ENCODE measurements at regions of chr15 and their contacts with region 1.

Region 1: DNA sequence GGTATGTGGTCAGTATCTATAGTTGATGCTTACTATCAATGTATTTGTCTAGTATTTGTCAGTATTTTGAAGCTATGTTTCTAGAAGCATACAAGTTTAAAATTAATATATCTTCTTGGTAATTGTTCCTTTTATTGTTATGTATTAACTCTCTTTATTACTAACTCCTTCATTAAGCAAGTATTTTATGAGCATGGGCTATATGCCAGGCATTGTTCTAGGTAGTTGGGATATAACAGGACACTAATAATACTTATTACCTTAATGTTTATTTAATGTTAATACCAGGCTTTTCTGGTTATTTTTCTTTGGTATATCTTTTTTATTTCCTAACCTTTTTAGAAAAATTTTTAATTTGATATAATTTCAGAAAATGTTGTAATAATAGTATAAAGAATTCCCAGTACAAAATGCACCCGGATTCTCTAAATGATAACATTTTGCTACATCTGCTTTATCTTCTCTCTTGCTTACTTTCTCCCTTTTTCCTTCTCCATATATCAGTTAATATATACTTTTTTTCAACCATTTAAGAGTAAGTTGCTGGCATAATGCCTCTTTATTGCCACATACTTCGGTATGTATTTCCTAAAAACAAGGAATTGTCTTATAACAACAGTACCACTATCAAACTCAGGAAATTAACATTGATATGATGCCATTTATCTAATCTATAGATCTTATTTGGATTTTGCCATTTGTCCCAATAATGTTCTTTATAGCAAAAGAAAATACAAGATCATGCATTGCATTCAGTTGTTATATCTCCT is 30.9 kb downstream of the LRRC49 start:
- DNase-seq: no peak
- H3K4me3 ChIP-seq: no peak overlapping the region
- H3K27ac ChIP-seq: no peak overlapping the region
- H3K4me1 ChIP-seq: no peaks in the 10 kb centered on the region
- H3K27me3 ChIP-seq: no peaks in the 10 kb centered on the region
- CTCF ChIP-seq: no peak

Region 2: DNA sequence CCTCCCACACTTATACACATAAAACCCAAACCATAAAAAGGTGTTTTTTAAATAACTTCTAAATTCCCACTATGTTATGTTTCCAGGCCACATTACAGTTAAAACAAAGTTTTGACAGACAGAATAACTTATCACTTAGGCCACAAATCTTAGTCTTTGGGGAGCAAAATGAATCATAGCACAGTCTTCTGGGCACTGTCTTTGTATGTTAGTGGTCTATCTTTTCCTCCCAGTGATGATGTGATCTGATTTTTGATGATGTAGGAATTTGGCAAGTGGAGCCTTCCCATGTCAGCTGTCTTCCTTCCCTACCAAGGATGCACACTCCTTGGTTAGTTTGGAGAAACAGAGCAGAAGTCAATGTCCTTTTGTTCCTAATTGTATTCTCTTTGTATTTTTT is 259.0 kb after region 1 on chr15:
- intact Hi-C with region 1: loop called (anchors 5 kb)
- DNase-seq: no peak
- H3K4me3 ChIP-seq: no peak overlapping the region
- H3K27ac ChIP-seq: no peak overlapping the region
- H3K4me1 ChIP-seq: peaks cover 0 to 8% (median 2%) of the 10 kb centered on the region in 4 donors
- H3K27me3 ChIP-seq: no peaks in the 10 kb centered on the region
- CTCF ChIP-seq: no peak